ENCODE measurements at regions of chr21 and their contacts with region 1.

Region 1: DNA sequence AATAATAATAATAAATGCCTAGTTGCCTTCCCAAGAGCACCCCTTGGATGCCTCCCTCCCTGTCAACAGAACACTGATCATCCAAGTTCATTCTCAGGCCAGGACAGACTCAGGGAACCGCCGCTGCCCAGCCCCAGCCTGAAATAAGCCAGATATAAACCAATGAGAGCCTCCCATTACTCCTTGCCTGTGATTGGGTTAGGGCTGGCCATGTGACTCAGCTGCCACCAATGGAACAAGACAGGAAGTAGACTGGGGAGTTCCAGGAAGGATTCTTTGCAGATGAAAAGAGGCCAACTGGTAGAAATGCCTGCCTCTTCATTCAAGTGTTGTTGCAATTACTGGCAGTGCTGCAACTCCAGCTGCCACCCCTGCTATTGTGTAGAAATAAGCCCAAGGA is 146.4 kb upstream of the TIAM1 start:
- DNase-seq: no peak
- ATAC-seq: no peak

Region 2: DNA sequence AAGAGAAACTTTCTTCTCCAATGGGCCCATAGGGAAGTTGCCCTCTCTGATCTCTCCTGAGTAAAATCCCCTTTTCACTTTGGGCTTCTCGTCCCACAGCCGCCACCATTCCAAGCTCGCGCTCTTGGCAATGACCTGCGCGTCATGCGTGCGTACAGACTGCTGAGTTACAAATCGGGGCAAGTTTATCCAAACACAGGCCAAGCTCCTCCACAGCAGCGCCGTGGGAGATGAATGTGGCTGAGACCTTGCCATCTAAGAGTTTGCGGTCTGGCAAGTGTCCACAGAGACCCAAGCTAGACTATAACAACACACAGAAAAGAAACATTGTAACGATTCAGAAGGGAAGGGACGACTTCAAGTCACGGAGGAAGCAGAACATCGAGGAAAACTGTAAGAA is 52.7 kb after region 1 on chr21:
- intact Hi-C with region 1: loop called (anchors 5 kb)
- DNase-seq: peak; percentile 73
- ATAC-seq: peak; percentile 95

Region 3: GRCh38 chr21:31629972-31630711 is 139.7 kb after region 1 on chr21:
- intact Hi-C with region 1: no loop called
- DNase-seq: no peak
- ATAC-seq: no peak